Activated naive CD4-positive, alpha-beta T cell treated with anti-CD3 and anti-CD28 coated beads, Interleukin-2, amount 10 ng/mL, durations not matched to agents 7 days and 5 days (primary cell): ENCODE measurements at regions of chr7 and their contacts with region 1.

Region 1: DNA sequence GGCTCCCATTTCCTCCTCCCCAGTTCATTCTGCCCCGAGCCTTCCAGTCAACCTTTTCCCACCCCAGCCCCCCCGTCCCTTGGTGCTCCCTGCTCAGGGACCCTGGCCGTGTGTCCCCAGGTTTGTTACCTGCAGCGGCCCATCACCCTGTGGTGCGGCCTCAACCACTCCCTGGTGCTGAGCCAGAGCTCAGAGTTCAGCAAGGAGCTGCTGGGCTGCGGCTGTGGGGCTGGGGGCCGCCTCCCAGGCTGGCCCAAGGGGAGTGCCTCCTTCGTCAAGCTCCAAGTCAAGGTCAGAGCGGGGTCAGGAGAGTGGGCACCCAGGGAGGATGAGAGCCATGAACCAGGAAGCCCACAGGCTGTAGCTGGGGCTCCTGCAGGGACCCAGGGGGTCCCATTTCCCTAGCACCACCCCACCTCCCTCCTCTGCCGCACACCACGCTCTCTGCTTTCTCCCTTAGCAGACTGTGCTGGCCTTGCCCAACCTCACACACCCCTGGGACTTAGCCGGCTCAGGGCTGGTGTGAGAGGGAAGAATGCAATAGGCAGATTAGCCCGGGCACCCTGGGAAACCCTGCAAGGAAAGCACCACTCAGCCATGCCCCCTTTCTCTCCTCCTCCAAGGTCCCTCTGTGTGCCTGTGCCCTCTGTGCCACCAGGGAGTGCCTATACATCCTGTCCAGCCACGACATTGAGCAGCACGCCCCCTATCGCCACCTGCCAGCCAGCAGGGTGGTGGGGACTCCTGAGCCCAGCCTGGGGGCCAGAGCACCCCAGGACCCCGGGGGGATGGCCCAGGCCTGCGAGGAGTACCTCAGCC is 2.0 kb upstream of the PCOLCE start:
- DNase-seq: no peak
- H3K4me3 Mint-ChIP-seq: no peak overlapping the region
- H3K27ac Mint-ChIP-seq: no peak overlapping the region
- H3K4me1 Mint-ChIP-seq: peaks cover 27% of the 10 kb centered on the region
- H3K27me3 Mint-ChIP-seq: peaks cover 57% of the 10 kb centered on the region

Region 2: DNA sequence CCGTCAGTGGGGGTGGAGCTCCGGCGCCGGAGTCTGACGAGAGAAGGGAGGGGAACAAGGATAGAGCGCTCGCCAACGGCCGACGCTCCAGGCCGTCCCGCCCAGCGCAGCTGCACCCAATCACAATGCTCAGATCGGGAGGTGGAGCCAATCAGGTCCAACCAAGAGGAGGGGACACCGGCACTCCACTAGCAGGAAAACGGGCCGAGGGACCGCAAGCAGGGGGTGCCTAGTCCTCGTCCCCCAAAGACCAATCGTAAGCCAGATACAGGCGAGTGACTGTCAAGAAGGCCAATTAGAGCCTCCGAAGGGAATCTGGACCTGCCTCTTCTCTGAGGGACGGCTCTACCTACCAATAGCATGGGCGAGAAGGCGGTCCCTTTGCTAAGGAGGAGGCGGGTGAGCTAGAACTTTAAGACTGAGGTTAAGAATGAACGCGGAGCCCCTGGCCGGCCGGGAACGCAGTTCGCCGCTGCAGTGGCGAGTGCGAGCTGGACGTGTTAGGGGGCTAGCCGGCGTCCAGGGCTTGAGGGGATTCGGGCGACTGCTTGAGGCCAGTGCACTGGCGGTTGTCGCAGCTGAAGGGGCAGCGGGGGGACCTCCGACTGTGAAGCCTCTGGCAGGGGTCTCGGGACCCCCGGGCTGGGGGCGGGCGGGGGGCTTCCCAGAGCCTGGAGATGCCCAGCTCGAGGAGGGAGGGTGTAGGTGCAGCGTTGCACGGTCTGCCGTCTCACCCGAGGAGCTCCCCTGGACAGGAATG is 13.7 kb before region 1 on chr7 and contains the start of gene FBXO24:
- CTCF ChIA-PET with region 1: interaction called, 12 read pairs
- DNase-seq: peak; percentile 100
- H3K4me3 Mint-ChIP-seq: peak within 1 kb of the TSS; percentile 89
- H3K27ac Mint-ChIP-seq: peak within 1 kb of the TSS; percentile 98
- H3K4me1 Mint-ChIP-seq: peaks cover 36% of the 10 kb centered on the region
- H3K27me3 Mint-ChIP-seq: peaks cover 30% of the 10 kb centered on the region

Region 3: GRCh38 chr7:100719523-100720319 is 119.6 kb after region 1 on chr7:
- CTCF ChIA-PET with region 1: no interaction called
- DNase-seq: no peak
- H3K4me3 Mint-ChIP-seq: no peak overlapping the region
- H3K27ac Mint-ChIP-seq: no peak overlapping the region
- H3K4me1 Mint-ChIP-seq: no peaks in the 10 kb centered on the region
- H3K27me3 Mint-ChIP-seq: peaks cover 78% of the 10 kb centered on the region

Region 4: DNA sequence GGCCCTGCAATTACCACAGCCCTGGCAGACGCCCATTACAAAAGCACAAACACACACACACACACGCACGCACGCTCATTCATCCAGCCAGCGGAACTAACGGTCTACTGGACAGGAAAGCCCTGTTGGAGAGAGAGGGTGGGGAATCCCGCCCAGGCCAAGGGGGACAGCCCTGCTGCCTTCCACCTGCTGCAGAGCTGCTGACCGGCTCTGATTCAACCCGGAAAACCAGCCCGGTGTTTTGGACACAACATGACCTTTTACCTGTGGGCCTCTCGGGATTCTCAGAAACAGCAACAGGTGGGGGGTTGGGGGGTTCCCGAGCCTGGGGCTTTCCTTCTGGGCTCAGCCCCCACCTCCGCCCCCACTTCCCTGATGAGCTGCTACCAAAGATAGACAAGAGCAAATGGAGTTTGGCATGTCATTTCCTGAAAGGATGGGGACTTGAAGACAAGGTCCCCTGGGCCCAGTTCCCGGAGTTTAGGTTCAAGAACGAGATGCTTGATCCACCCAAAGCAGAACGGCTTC is 508.3 kb after region 1 on chr7:
- CTCF ChIA-PET with region 1: no interaction called
- DNase-seq: no peak
- H3K4me3 Mint-ChIP-seq: no peak overlapping the region
- H3K27ac Mint-ChIP-seq: no peak overlapping the region
- H3K4me1 Mint-ChIP-seq: no peaks in the 10 kb centered on the region
- H3K27me3 Mint-ChIP-seq: peaks cover 71% of the 10 kb centered on the region